Thyroid gland (tissue), 4 donors: ENCODE measurements at regions of chr3 and their contacts with region 1.

Region 1: DNA sequence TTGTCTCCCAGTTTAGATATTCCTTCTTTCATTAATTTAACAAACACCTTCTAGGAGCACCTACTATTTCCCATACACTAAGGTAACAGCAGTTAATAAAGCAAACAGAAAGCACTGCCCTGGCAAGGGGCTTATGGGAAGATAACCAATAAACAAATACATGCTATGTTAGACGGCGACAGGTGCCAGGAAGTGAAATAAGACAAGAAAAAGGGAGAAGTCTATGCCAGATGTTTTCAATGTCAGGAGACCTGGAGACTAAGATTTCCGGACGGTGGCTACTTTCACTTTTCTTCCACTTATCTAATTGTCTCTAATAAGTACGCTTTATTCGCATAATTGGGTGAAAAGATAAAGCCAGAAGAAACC is 32.5 kb upstream of the ZNF445 start:
- DNase-seq: no peak
- H3K4me3 ChIP-seq: peak overlapping the region; percentile 21 to 69 (median 61)
- H3K27ac ChIP-seq: peak overlapping the region in 2 of 3 donors; percentile 76
- H3K4me1 ChIP-seq: peaks cover 4 to 9% of the 10 kb centered on the region in 2 donors
- H3K27me3 ChIP-seq: no peaks in the 10 kb centered on the region
- CTCF ChIP-seq: no peak
- POLR2A ChIP-seq: no peak

Region 2: DNA sequence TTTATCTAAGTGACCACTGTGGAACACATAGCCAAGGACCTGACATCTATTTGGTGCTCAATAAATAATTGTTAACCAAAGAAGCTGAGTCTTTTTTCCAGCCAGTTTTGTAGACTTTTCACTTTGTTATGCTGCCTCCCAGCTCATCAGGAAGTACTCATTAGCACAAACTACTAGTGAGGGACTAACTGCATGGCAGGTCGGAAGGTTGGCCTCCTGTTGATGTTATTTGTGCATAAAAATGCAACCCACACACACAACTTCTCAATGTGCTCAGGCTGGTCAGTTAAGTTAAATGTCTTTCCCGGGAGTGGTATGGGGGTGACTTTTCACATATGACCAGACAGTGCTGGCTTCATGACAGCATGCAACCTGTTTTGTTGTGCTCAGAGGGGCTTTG is 531.3 kb before region 1 on chr3:
- intact Hi-C with region 1: no loop called
- DNase-seq: no peak
- H3K4me3 ChIP-seq: no peak overlapping the region
- H3K27ac ChIP-seq: no peak overlapping the region
- H3K4me1 ChIP-seq: no peaks in the 10 kb centered on the region
- H3K27me3 ChIP-seq: no peaks in the 10 kb centered on the region
- CTCF ChIP-seq: no peak
- POLR2A ChIP-seq: no peak

Region 3: GRCh38 chr3:44338010-44338827 is 171.8 kb before region 1 on chr3 and contains the start of gene TCAIM:
- intact Hi-C with region 1: loop called (anchors 10 kb)
- DNase-seq: peak; percentile 99
- H3K4me3 ChIP-seq: peak within 1 kb of the TSS; percentile 34 to 90 (median 55)
- H3K27ac ChIP-seq: peak within 1 kb of the TSS; percentile 61 to 99 (median 90)
- H3K4me1 ChIP-seq: peaks cover 10 to 26% of the 10 kb centered on the region in 2 donors
- H3K27me3 ChIP-seq: no peaks in the 10 kb centered on the region
- CTCF ChIP-seq: peak in 1 of 6 experiments; percentile 24
- POLR2A ChIP-seq: peak; percentile 63 to 93
- total RNA-seq, gene TCAIM: 26.2 to 33.3 (median 27.7) TPM

Region 4: DNA sequence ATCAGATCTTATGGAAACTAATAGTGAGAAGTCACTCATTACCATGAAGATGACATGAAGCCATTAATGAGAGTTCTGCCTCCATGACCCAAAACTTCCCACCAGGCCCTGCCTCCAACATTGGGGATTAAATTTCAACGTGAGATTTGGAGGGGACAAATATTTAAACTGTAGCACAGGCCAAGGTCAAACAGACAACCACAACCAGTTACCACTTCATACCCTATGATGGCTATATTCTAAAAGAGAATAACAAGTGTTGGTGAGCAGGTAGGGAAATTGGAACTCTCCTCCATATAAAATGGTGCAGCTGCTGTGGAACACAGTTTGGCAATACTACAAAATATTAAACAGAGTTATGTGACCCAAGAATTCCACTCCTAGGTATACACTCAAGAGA is 134.5 kb before region 1 on chr3:
- intact Hi-C with region 1: no loop called
- DNase-seq: no peak
- H3K4me3 ChIP-seq: no peak overlapping the region
- H3K27ac ChIP-seq: no peak overlapping the region
- H3K4me1 ChIP-seq: no peaks in the 10 kb centered on the region
- H3K27me3 ChIP-seq: no peaks in the 10 kb centered on the region
- CTCF ChIP-seq: no peak
- POLR2A ChIP-seq: no peak